Dendritic cell treated with granulocyte-macrophage colony-stimulating factor and Interleukin-4, amounts not matched to agents 40 ng/mL and 50 ng/mL, for 4 days (primary cell): ENCODE measurements at regions of chr1 and their contacts with region 1.

Region 1: GRCh38 chr1:109373126-109373525 is 24.6 kb downstream of the SORT1 start:
- H3K4me3 Mint-ChIP-seq: peak overlapping the region; percentile 40
- H3K27ac Mint-ChIP-seq: peak overlapping the region; percentile 86
- H3K4me1 Mint-ChIP-seq: peaks cover 71% of the 10 kb centered on the region
- H3K27me3 Mint-ChIP-seq: no peaks in the 10 kb centered on the region

Region 2: GRCh38 chr1:109312978-109313775 is 59.9 kb before region 1 on chr1:
- intact Hi-C with region 1: no loop called
- H3K4me3 Mint-ChIP-seq: no peak overlapping the region
- H3K27ac Mint-ChIP-seq: no peak overlapping the region
- H3K4me1 Mint-ChIP-seq: peaks cover 27% of the 10 kb centered on the region
- H3K27me3 Mint-ChIP-seq: no peaks in the 10 kb centered on the region

Region 3: DNA sequence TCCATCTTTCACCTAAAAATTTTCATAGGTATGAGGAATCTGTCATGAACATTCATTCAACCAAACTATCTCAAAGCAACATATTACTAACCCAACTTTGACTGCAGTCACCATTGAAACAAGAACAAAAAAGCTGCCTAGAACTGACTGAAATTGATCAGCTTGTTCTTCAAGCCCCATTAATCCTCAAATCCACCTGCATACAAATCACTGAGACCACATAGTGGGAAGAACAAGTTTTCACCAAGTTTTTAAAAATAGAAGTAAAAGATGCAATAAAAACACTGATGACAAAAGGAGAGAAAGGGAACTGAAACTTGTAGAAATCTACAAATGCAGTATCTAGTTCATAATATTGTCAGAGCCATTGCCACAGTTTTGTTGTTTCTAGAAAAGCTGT is 18.5 kb after region 1 on chr1:
- intact Hi-C with region 1: loop called (anchors 2 kb)
- H3K4me3 Mint-ChIP-seq: peak overlapping the region; percentile 81
- H3K27ac Mint-ChIP-seq: peak overlapping the region; percentile 93
- H3K4me1 Mint-ChIP-seq: peaks cover 93% of the 10 kb centered on the region
- H3K27me3 Mint-ChIP-seq: no peaks in the 10 kb centered on the region

Region 4: GRCh38 chr1:109659997-109660690 is 287.0 kb after region 1 on chr1:
- intact Hi-C with region 1: no loop called
- H3K4me3 Mint-ChIP-seq: no peak overlapping the region
- H3K27ac Mint-ChIP-seq: peak overlapping the region; percentile 67
- H3K4me1 Mint-ChIP-seq: peaks cover 56% of the 10 kb centered on the region
- H3K27me3 Mint-ChIP-seq: peaks cover under 1% of the 10 kb centered on the region

Region 5: GRCh38 chr1:110243574-110243973 is 870.4 kb after region 1 on chr1:
- intact Hi-C with region 1: no loop called
- H3K4me3 Mint-ChIP-seq: no peak overlapping the region
- H3K27ac Mint-ChIP-seq: no peak overlapping the region
- H3K4me1 Mint-ChIP-seq: peaks cover 15% of the 10 kb centered on the region
- H3K27me3 Mint-ChIP-seq: peaks cover 15% of the 10 kb centered on the region